ENCODE measurements at regions of chr17 and their contacts with region 1.

Region 1: DNA sequence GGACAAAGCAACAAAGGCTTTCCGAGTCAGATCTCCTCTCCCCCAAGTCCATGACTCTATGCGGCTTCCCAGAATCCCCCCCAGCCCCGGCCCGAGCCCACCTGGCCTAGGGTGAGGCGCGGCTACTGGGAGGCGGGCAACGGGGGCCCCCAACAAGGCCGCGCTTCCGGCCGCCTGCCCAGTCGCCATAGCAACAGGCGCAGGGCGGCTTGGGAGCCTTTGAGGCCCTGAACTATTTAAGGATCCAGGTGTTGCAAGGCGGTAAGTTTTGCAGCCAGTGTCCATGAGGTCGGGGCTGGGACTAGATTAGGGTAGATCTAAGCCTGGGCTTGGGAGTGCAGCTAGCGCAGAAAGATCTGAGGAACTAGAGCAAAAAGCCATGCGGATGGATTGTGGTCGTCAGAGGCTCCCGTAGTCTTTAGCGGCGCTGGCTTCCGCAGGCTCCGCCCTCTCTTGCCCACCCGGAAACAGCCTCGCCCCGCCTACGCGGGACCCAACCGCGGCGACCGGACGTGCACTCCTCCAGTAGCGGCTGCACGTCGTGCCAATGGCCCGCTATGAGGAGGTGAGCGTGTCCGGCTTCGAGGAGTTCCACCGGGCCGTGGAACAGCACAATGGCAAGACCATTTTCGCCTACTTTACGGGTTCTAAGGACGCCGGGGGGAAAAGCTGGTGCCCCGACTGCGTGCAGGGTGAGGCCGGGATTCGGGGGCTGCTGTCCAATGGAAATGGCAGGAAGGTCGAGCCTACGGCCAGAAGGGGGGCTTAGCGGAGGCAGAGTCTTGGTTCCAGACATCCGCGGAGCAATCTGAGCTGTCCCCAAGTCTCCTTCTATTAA is at the starts of genes KIAA0753 and TXNDC17:
- DNase-seq: peak; percentile 51
- H3K4me3 ChIP-seq: peak within 1 kb of the TSS; percentile 67 to 94 (median 88)
- H3K27ac ChIP-seq: peak within 1 kb of the TSS; percentile 91 to 94 (median 93)
- H3K4me1 ChIP-seq: peaks cover 19 to 68% (median 37%) of the 10 kb centered on the region in 3 donors
- H3K27me3 ChIP-seq: no peaks in the 10 kb centered on the region
- CTCF ChIP-seq: peak in 1 of 6 experiments; percentile 2
- POLR2A ChIP-seq: peak in 3 of 4 donors; percentile 26 to 94 (median 85)
- total RNA-seq, gene KIAA0753: 8.1 to 17.4 (median 11.4) TPM
- total RNA-seq, gene TXNDC17: 446 to 796 (median 696) TPM

Region 2: DNA sequence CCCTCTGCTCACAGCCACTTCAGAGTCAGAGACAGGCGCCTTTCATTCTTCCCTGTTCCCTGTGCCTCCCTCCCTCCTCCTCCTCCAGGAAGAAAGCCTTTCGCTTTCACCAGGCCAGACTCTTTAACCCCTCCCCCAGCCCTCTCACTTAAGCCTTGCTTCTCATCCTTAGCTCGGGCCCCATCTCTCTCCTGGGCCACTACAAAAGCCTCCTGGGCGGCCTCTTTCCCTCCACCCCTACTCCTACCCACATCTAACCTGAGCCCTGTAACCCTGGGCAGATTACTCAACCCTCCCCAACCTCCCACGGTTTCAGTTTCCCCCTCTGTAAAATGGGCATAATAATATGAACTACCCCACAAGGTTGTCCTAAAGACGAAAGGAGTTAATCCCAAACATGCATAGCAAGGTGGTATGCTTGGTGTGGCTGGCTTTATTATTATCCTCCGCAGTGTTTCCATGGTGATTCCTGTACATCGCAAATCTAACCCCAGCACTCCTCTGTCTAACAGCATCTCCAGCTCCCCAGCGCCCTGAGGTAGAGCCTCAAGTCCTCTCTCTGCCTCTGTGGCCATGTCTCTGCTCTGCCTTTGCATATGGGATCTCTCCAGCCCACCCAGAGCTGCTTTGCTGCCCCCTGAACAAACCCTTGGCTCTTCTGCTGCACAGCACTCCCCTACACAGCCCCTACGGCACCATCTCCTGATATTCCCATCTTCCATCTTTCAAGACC is 178.8 kb before region 1 on chr17:
- intact Hi-C with region 1: loop called (anchors 10 kb)
- DNase-seq: no peak
- H3K4me3 ChIP-seq: no peak overlapping the region
- H3K27ac ChIP-seq: no peak overlapping the region
- H3K4me1 ChIP-seq: peaks cover 4 to 16% (median 5%) of the 10 kb centered on the region in 3 donors
- H3K27me3 ChIP-seq: no peaks in the 10 kb centered on the region
- CTCF ChIP-seq: no peak
- POLR2A ChIP-seq: no peak

Region 3: GRCh38 chr17:6555331-6556120 is 85.2 kb before region 1 on chr17:
- intact Hi-C with region 1: loop called (anchors 10 kb)
- DNase-seq: no peak
- H3K4me3 ChIP-seq: peak overlapping the region; percentile 60 to 90 (median 86)
- H3K27ac ChIP-seq: peak overlapping the region; percentile 87 to 97 (median 94)
- H3K4me1 ChIP-seq: peaks cover 37 to 86% (median 46%) of the 10 kb centered on the region in 3 donors
- H3K27me3 ChIP-seq: peaks cover 0 to 28% (median 0%) of the 10 kb centered on the region in 4 donors
- CTCF ChIP-seq: no peak
- POLR2A ChIP-seq: peak in 2 of 4 donors; percentile 24 to 26

Region 4: DNA sequence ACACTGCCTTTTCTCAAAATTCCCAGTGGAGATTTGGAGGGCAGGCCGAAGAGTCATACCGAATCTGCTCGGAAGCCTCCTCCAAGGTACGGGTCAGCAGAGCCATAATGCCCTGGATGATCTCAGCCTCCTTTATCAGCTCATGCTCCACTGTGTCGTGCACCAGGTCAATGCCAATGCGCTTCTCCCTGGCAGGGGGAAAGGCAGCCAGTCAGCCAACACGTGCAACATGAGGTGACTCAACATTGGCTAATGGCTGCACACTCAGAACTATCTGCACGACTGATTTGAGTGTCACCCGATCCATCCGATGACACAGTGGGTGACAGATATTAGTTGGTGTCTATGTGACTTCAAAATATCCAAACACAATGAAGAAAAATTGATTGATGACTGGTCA is 175.0 kb after region 1 on chr17:
- intact Hi-C with region 1: no loop called
- DNase-seq: no peak
- H3K4me3 ChIP-seq: no peak overlapping the region
- H3K27ac ChIP-seq: no peak overlapping the region
- H3K4me1 ChIP-seq: peaks cover 0 to 6% (median 0%) of the 10 kb centered on the region in 3 donors
- H3K27me3 ChIP-seq: peaks cover 0 to 19% (median 0%) of the 10 kb centered on the region in 4 donors
- CTCF ChIP-seq: no peak
- POLR2A ChIP-seq: no peak

Measured in esophagus squamous epithelium (tissue), 5 donors.